ENCODE measurements at regions of chr13 and their contacts with region 1.

Region 1: GRCh38 chr13:30341815-30342570 is 34.6 kb upstream of the KATNAL1 start:
- DNase-seq: peak; percentile 44
- ATAC-seq: peak; percentile 74
- H3K4me3 ChIP-seq: peak overlapping the region; percentile 7 to 39; a peak in 2 of 4 replicates
- H3K27ac ChIP-seq: peak overlapping the region; percentile 54; the same call in 1 of the 2 replicates
- H3K4me1 ChIP-seq: peaks cover 54 to 68% of the 10 kb centered on the region in 2 experiments
- H3K27me3 ChIP-seq: no peaks in the 10 kb centered on the region
- CTCF ChIP-seq: no peak
- POLR2A ChIP-seq: no peak
- RAD21 ChIP-seq: no peak

Region 2: DNA sequence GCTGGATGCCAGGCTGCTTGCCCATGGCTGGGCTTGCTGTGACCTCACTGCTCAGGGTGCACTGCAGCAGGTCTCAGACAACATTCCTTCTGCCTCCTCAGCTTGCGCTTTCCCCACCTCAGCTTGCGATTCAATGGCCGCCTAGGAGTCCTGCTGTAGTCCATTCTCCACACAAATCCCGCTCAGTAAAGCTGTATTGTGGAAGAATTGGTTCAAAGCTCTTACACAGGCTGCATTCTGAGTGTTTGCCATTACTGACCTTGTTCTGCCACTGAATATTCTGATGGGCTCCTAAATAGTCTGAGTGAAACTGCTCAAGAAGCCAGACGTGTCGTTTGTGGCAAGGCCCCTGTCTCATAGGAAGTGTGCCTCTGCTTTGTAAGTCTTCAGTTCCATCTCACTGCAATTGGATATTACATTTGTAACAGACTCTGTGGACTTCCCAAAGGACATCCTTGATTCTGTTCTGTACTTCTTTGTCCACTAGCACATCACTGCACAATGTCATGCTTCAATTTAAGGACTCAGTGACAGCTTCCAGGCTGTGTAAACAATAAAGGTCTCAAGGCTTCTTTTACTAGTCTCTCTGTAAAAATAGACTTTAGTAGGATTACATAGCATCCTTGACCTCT is 84.4 kb before region 1 on chr13:
- CTCF ChIA-PET with region 1: no interaction called
- POLR2A ChIA-PET with region 1: no interaction called
- RAD21 ChIA-PET with region 1: no interaction called
- intact Hi-C with region 1: loop called (anchors 5 kb)
- DNase-seq: no peak
- ATAC-seq: no peak
- H3K4me3 ChIP-seq: no peak overlapping the region
- H3K27ac ChIP-seq: no peak overlapping the region
- H3K4me1 ChIP-seq: peaks cover 9 to 16% of the 10 kb centered on the region in 2 experiments; a peak in 2 of 4 replicates
- H3K27me3 ChIP-seq: no peaks in the 10 kb centered on the region
- CTCF ChIP-seq: no peak
- POLR2A ChIP-seq: no peak
- RAD21 ChIP-seq: no peak

Region 3: DNA sequence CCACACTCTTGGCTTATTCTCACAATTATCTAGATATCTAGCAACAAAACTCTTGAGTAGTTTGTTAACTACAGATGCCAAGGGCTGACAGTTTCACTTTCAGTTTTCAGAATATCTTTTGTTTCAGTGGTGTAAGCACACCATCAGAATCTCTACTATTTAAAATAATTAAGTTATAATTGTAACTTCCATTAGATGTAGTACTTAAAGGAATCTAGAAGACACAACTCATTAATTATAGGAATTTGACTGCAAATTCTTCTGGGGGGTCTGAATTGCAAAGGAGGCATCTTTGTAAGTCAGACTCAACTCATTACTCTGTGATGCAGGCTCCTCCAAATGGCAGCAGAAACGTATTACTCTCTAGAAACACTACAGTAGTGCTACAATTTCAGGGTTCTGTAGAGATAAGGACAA is 230.9 kb after region 1 on chr13:
- CTCF ChIA-PET with region 1: no interaction called
- POLR2A ChIA-PET with region 1: no interaction called
- RAD21 ChIA-PET with region 1: no interaction called
- intact Hi-C with region 1: loop called (anchors 10 kb)
- DNase-seq: no peak
- ATAC-seq: no peak
- H3K4me3 ChIP-seq: peak overlapping the region in 1 of 2 experiments; percentile 26; a peak in 3 of 4 replicates
- H3K27ac ChIP-seq: no peak overlapping the region
- H3K4me1 ChIP-seq: peaks cover 34 to 42% of the 10 kb centered on the region in 2 experiments
- H3K27me3 ChIP-seq: no peaks in the 10 kb centered on the region
- CTCF ChIP-seq: 0 out of 6 replicates have a peak, but pooled peaks of 2 of the 3 experiments have one; percentile 12 to 13
- POLR2A ChIP-seq: no peak
- RAD21 ChIP-seq: peak; percentile 59